Endothelial cell of umbilical vein (primary cell): ENCODE measurements at regions of chr3 and their contacts with region 1.

Region 1: DNA sequence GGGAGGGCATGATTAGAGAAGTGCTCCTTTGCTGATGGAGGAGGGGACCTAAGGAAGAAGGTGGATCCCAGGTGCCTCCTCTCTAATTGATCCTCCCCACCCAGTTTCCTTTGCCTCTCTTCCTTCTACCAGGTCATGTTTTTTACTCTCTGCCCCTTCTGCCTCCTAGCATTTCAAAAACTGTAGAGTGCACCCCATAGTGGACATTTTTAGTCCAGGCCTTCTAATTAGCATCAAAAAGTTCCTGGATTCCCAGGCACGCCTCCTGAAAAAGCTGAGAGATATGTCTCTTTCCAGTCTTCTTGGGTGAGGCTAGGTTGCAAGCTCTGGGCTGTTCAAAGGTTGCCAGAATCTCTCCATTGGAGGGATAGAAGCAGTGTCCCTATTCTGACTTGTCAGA is 18.7 kb upstream of the ITGB5 start:
- DNase-seq: no peak
- H3K4me3 ChIP-seq: no peak overlapping the region
- H3K27ac ChIP-seq: no peak overlapping the region
- H3K4me1 ChIP-seq: no peaks in the 10 kb centered on the region
- H3K27me3 ChIP-seq: peaks cover 26 to 27% of the 10 kb centered on the region in 2 experiments
- CTCF ChIP-seq: no peak
- POLR2A ChIP-seq: no peak

Region 2: GRCh38 chr3:124741027-124741426 is 164.8 kb before region 1 on chr3:
- CTCF ChIA-PET with region 1: interaction called, 7 read pairs
- POLR2A ChIA-PET with region 1: interaction called, 11 read pairs
- dilution Hi-C with region 1: no loop called
- intact Hi-C with region 1: no loop called
- DNase-seq: no peak
- H3K4me3 ChIP-seq: no peak overlapping the region
- H3K27ac ChIP-seq: no peak overlapping the region
- H3K4me1 ChIP-seq: no peaks in the 10 kb centered on the region
- H3K27me3 ChIP-seq: no peaks in the 10 kb centered on the region
- CTCF ChIP-seq: no peak
- POLR2A ChIP-seq: no peak

Region 3: GRCh38 chr3:124774327-124774718 is 131.5 kb before region 1 on chr3:
- CTCF ChIA-PET with region 1: interaction called, 54 read pairs
- POLR2A ChIA-PET with region 1: no interaction called
- dilution Hi-C with region 1: no loop called
- intact Hi-C with region 1: loop called (anchors 2 kb)
- DNase-seq: peak; percentile 64
- H3K4me3 ChIP-seq: no peak overlapping the region
- H3K27ac ChIP-seq: peak overlapping the region; percentile 70
- H3K4me1 ChIP-seq: peaks cover 63% of the 10 kb centered on the region
- H3K27me3 ChIP-seq: no peaks in the 10 kb centered on the region
- CTCF ChIP-seq: no peak
- POLR2A ChIP-seq: no peak

Region 4: GRCh38 chr3:124800511-124801258 is 105.2 kb before region 1 on chr3:
- CTCF ChIA-PET with region 1: interaction called, 17 read pairs
- POLR2A ChIA-PET with region 1: no interaction called
- dilution Hi-C with region 1: no loop called
- intact Hi-C with region 1: no loop called
- DNase-seq: peak; percentile 76
- H3K4me3 ChIP-seq: no peak overlapping the region
- H3K27ac ChIP-seq: no peak overlapping the region
- H3K4me1 ChIP-seq: peaks cover 8% of the 10 kb centered on the region
- H3K27me3 ChIP-seq: no peaks in the 10 kb centered on the region
- CTCF ChIP-seq: no peak
- POLR2A ChIP-seq: no peak

Region 5: DNA sequence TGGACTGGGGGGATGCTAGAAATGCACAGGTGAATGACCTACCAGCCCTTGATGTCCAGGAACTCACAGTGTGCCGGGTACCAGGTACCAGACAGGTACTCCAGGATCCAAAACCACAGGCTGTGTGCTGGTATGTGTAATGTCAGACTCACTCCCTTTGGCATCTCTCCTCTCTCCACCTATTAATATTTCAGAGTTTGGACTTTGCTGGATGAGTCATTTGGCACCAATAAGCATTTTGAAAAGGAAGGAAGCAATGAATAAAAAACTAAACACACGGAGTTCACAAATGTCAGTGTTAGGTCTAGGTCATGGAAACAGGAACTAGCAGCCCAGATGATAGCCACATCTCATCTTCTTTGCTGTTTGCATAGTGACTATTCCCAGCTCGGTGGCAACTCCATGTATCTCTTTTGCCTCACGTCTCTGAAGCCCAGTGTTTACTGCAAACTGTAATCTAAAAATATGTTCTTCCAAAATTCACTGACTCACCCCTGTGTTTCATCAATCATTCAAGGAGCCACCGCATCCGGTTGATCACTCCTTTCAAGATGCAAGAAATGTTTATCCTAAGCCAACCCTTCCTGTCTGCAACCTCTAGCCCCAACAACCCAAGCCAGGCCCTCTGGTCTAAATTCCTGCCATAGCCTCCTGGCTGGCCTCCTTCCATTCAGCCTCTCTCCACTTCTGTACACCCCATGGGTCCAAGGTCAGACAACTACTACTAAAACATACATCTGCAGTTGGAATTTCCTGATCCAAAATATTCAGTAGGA is 27.1 kb before region 1 on chr3:
- CTCF ChIA-PET with region 1: interaction called, 15 read pairs
- POLR2A ChIA-PET with region 1: no interaction called
- dilution Hi-C with region 1: no loop called
- intact Hi-C with region 1: no loop called
- DNase-seq: peak; percentile 94
- H3K4me3 ChIP-seq: no peak overlapping the region
- H3K27ac ChIP-seq: peak overlapping the region; percentile 91
- H3K4me1 ChIP-seq: peaks cover 34% of the 10 kb centered on the region
- H3K27me3 ChIP-seq: no peaks in the 10 kb centered on the region
- CTCF ChIP-seq: no peak
- POLR2A ChIP-seq: peak; percentile 57